SK-N-SH (cell line): ENCODE measurements at regions of chr6 and their contacts with region 1.

Region 1: DNA sequence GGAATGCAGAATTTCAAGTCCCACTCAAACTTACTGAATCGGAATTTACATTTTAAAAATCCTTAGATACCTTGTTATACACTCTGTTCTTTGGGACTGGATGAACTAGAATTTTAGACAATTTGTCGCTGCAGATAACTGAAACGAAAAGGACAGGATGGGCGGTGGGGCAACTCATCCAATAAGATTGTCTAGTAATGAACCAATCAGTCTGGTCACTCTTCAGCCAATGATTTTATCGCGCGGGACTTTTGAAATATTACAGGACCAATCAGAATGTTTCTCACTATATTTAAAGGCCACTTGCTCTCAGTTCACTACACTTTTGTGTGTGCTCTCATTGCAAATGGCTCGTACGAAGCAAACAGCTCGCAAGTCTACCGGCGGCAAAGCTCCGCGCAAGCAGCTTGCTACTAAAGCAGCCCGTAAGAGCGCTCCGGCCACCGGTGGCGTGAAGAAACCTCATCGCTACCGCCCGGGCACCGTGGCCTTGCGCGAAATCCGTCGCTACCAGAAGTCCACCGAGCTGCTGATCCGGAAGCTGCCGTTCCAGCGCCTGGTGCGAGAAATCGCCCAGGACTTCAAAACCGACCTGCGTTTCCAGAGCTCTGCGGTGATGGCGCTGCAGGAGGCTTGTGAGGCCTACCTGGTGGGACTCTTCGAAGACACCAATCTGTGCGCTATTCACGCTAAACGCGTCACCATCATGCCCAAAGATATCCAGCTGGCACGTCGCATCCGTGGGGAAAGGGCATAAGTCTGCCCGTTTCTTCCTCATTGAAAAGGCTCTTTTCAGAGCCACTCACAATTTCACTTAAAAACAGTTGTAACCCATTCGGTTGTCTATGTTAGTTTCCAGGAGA is 41.9 kb upstream of the HFE start:
- DNase-seq: peak; percentile 77
- H3K4me3 ChIP-seq: peak overlapping the region; percentile 57 to 60
- H3K27ac ChIP-seq: peak overlapping the region; percentile 79 to 97
- H3K4me1 ChIP-seq: peaks cover 0 to 12% of the 10 kb centered on the region in 2 experiments; a peak in 2 of 4 replicates
- H3K27me3 ChIP-seq: no peaks in the 10 kb centered on the region
- CTCF ChIP-seq: peak; percentile 37
- EP300 ChIP-seq: peak in 1 of 2 experiments; percentile 49; a peak in 1 of 4 replicates
- RAD21 ChIP-seq: no peak

Region 2: GRCh38 chr6:25913741-25914140 is 131.6 kb before region 1 on chr6:
- CTCF ChIA-PET with region 1: no interaction called
- POLR2A ChIA-PET with region 1: no interaction called
- DNase-seq: no peak
- H3K4me3 ChIP-seq: no peak overlapping the region
- H3K27ac ChIP-seq: no peak overlapping the region
- H3K4me1 ChIP-seq: no peaks in the 10 kb centered on the region
- H3K27me3 ChIP-seq: no peaks in the 10 kb centered on the region
- CTCF ChIP-seq: no peak
- EP300 ChIP-seq: no peak
- RAD21 ChIP-seq: no peak

Region 3: GRCh38 chr6:26103770-26104456 is 58.6 kb after region 1 on chr6:
- CTCF ChIA-PET with region 1: interaction called, 3 read pairs
- POLR2A ChIA-PET with region 1: interaction called, 21 read pairs
- DNase-seq: peak; percentile 69
- H3K4me3 ChIP-seq: peak overlapping the region; percentile 55 to 65
- H3K27ac ChIP-seq: peak overlapping the region; percentile 85 to 97
- H3K4me1 ChIP-seq: peaks cover 7 to 17% of the 10 kb centered on the region in 2 experiments
- H3K27me3 ChIP-seq: no peaks in the 10 kb centered on the region
- CTCF ChIP-seq: peak; percentile 62
- EP300 ChIP-seq: peak; percentile 91 to 97
- RAD21 ChIP-seq: no peak

Region 4: DNA sequence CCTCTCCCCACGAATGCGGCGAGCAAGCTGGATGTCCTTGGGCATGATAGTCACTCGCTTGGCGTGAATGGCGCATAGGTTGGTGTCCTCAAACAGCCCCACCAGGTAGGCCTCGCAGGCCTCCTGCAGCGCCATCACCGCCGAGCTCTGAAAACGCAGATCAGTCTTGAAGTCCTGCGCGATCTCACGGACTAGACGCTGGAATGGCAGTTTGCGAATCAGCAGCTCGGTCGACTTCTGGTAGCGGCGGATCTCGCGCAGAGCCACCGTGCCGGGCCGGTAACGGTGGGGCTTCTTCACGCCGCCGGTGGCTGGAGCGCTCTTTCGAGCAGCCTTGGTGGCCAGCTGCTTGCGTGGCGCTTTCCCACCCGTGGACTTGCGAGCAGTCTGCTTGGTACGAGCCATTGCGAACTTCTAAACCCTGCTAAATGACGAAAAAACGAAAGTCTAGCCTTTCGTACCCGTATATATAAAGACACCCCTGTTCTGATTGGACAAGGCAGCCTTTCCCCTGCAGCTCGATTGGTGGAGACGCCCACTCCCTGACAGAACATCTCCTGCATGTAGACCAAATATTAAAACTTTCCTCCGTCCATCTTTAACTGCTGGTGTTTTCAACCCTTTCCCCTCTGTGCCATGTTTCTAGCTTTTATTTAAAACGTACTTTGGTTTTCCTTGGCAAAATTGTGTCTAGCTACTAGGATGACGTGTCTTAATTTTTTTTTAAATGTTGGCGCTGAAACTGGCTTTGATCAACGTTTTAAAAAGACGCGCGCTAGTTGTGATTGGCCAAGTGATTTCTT is 151.8 kb after region 1 on chr6:
- CTCF ChIA-PET with region 1: no interaction called
- POLR2A ChIA-PET with region 1: interaction called, 34 read pairs
- DNase-seq: peak; percentile 81
- H3K4me3 ChIP-seq: peak overlapping the region; percentile 84 to 96
- H3K27ac ChIP-seq: peak overlapping the region; percentile 87 to 94
- H3K4me1 ChIP-seq: peaks cover 12 to 16% of the 10 kb centered on the region in 2 experiments; a peak in 3 of 4 replicates
- H3K27me3 ChIP-seq: no peaks in the 10 kb centered on the region
- CTCF ChIP-seq: peak; percentile 19; the same call in 1 of the 2 replicates
- EP300 ChIP-seq: peak in 1 of 2 experiments; percentile 43; a peak in 1 of 4 replicates
- RAD21 ChIP-seq: no peak

Region 5: DNA sequence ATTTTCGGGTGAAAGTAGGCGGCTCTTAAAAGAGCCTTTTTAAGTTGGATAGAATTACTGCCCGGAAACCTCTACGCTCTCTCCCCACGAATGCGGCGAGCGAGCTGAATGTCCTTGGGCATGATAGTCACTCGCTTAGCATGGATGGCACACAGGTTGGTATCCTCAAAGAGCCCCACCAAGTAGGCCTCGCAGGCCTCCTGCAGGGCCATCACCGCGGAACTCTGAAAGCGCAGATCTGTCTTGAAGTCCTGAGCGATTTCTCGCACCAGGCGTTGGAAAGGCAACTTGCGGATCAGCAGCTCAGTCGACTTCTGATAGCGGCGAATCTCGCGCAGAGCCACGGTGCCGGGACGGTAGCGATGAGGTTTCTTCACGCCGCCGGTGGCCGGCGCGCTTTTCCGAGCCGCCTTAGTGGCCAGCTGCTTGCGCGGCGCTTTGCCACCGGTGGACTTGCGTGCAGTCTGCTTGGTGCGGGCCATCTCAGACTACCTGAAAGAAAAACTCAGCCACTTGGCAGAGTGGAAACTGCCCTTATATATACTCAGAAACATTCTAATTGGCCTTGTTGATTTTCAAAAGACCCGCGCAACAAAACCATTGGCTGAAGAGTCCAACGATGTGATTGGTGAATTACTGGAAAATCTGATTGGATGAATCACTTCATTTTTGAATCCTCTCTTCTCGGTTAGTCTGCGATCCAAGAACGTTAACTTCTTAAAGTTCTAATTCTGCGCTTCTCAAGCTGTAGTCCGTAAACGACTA is 225.8 kb after region 1 on chr6:
- CTCF ChIA-PET with region 1: interaction called, 4 read pairs
- POLR2A ChIA-PET with region 1: interaction called, 16 read pairs
- DNase-seq: peak; percentile 87
- H3K4me3 ChIP-seq: peak overlapping the region; percentile 66 to 75
- H3K27ac ChIP-seq: peak overlapping the region; percentile 84 to 99
- H3K4me1 ChIP-seq: peaks cover 0 to 14% of the 10 kb centered on the region in 2 experiments; a peak in 2 of 4 replicates
- H3K27me3 ChIP-seq: no peaks in the 10 kb centered on the region
- CTCF ChIP-seq: no peak
- EP300 ChIP-seq: peak in 1 of 2 experiments; percentile 40; a peak in 1 of 4 replicates
- RAD21 ChIP-seq: no peak

Region 6: GRCh38 chr6:26285143-26286134 is 240.1 kb after region 1 on chr6:
- CTCF ChIA-PET with region 1: no interaction called
- POLR2A ChIA-PET with region 1: no interaction called
- DNase-seq: peak; percentile 80
- H3K4me3 ChIP-seq: peak overlapping the region; percentile 78 to 89
- H3K27ac ChIP-seq: peak overlapping the region; percentile 95 to 98
- H3K4me1 ChIP-seq: no peaks in the 10 kb centered on the region; a peak in 2 of 4 replicates
- H3K27me3 ChIP-seq: no peaks in the 10 kb centered on the region
- CTCF ChIP-seq: no peak
- EP300 ChIP-seq: peak; percentile 84 to 99
- RAD21 ChIP-seq: 0 out of 2 replicates have a peak, but pooled peaks have one; percentile 4

Region 7: DNA sequence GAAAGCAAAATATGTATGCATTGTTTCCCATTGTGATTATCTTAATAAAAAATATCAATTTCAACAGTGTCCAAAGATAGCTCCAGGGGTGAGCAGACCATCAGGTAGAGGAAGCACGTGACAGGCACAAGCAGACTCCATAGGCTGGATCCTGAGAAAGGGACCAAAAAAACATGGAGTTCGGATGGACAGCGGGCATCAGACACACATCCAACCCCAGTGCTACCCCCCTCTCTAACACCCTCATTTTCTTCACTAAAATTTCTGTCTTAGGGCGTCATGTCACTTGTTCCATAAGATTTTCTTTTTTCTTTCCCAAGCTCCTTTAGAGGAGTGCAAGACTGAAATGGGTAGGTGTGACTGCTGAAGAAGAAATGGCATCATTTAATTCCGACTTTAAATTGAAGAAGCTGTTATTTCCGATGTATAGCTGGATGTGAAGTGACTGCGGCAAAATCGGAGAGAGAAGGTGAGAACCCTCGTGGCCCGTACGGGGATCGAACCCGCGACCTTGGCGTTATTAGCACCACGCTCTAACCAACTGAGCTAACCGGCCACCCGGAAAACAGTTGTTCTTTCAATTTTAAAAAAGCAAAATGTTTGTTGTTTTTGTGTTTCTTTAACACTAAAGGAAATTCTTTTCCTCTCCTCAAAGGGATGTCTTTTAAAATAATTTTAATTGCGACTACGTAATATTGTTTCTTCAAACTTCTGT is 1192.0 kb after region 1 on chr6:
- CTCF ChIA-PET with region 1: no interaction called
- POLR2A ChIA-PET with region 1: no interaction called
- DNase-seq: no peak
- H3K4me3 ChIP-seq: no peak overlapping the region
- H3K27ac ChIP-seq: no peak overlapping the region
- H3K4me1 ChIP-seq: no peaks in the 10 kb centered on the region; a peak in 2 of 4 replicates
- H3K27me3 ChIP-seq: peaks cover 51% of the 10 kb centered on the region; the same call in 1 of the 2 replicates
- CTCF ChIP-seq: no peak
- EP300 ChIP-seq: no peak
- RAD21 ChIP-seq: no peak

Region 8: DNA sequence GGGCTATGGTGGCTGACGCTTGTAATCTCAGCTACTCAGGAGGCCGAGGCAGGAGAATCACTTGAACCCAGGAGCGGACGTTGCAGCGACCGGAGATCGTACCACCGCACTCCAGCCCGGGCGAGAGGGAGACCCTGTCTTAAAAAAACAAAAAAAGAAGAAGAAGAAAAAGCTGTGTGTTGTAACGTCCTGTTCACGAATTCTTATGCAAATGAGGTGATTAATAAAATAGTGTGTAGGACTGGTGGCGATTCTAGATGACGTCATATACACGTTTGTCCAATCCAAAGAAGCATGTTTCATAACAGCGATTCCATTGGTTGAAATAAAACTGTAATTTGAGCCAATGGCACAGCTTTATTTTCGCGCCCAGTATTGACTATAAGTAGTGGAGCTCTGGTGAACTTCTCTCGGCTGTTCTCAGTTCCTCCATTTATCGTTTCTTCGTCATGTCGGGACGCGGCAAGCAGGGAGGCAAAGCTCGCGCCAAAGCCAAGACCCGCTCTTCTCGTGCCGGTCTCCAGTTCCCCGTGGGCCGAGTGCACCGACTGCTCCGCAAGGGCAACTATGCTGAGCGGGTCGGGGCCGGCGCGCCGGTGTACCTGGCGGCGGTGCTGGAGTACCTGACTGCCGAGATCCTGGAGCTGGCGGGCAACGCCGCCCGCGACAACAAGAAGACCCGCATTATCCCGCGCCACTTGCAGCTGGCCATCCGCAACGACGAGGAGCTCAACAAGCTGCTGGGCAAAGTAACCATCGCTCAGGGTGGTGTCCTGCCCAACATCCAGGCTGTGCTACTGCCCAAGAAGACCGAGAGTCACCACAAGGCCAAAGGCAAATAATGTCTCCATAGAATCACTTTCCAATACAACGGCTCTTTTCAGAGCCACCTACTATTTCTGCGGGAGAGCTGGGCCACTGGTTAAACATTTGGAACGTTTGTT is 1819.9 kb after region 1 on chr6:
- CTCF ChIA-PET with region 1: no interaction called
- POLR2A ChIA-PET with region 1: interaction called, 13 read pairs
- DNase-seq: peak; percentile 85
- H3K4me3 ChIP-seq: peak overlapping the region; percentile 47 to 80
- H3K27ac ChIP-seq: peak overlapping the region; percentile 80 to 97
- H3K4me1 ChIP-seq: peaks cover 0 to 20% of the 10 kb centered on the region in 2 experiments; a peak in 2 of 4 replicates
- H3K27me3 ChIP-seq: no peaks in the 10 kb centered on the region
- CTCF ChIP-seq: no peak
- EP300 ChIP-seq: no peak; a peak in 1 of 4 replicates
- RAD21 ChIP-seq: no peak